Esophagus squamous epithelium (tissue), 5 donors: ENCODE measurements at regions of chr3 and their contacts with region 1.

Region 1: GRCh38 chr3:194333212-194333980 is 17.7 kb downstream of the CPN2 start:
- DNase-seq: no peak
- H3K4me3 ChIP-seq: peak overlapping the region; percentile 19 to 68 (median 48)
- H3K27ac ChIP-seq: peak overlapping the region in 3 of 4 donors; percentile 10 to 83 (median 79)
- H3K4me1 ChIP-seq: peaks cover 10 to 56% (median 23%) of the 10 kb centered on the region in 3 donors
- H3K27me3 ChIP-seq: peaks cover 0 to 42% (median 0%) of the 10 kb centered on the region in 4 donors
- CTCF ChIP-seq: peak; percentile 97 to 99 (median 98)
- POLR2A ChIP-seq: no peak

Region 2: DNA sequence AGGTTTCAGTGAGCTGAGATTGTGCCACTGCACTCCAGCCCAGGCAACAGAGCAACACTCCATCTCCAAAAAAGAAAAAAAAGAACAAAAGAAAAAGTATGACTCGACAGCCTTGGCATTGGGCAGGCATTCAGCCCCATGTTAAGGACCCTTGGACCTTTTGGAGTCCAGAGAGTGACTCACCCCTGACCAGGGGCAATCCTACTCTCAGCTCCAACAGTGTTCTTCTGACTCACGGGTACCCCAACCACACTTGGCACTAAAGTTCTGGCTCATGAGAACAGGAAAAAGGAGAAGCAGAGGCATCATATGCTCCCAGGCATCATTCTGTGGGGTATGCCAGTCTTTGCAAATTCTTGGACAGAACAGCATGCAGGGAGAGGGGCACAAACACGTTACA is 449.8 kb before region 1 on chr3:
- intact Hi-C with region 1: no loop called
- DNase-seq: no peak
- H3K4me3 ChIP-seq: no peak overlapping the region
- H3K27ac ChIP-seq: peak overlapping the region; percentile 63 to 87 (median 84)
- H3K4me1 ChIP-seq: peaks cover 3 to 61% (median 27%) of the 10 kb centered on the region in 3 donors
- H3K27me3 ChIP-seq: no peaks in the 10 kb centered on the region
- CTCF ChIP-seq: no peak
- POLR2A ChIP-seq: no peak

Region 3: DNA sequence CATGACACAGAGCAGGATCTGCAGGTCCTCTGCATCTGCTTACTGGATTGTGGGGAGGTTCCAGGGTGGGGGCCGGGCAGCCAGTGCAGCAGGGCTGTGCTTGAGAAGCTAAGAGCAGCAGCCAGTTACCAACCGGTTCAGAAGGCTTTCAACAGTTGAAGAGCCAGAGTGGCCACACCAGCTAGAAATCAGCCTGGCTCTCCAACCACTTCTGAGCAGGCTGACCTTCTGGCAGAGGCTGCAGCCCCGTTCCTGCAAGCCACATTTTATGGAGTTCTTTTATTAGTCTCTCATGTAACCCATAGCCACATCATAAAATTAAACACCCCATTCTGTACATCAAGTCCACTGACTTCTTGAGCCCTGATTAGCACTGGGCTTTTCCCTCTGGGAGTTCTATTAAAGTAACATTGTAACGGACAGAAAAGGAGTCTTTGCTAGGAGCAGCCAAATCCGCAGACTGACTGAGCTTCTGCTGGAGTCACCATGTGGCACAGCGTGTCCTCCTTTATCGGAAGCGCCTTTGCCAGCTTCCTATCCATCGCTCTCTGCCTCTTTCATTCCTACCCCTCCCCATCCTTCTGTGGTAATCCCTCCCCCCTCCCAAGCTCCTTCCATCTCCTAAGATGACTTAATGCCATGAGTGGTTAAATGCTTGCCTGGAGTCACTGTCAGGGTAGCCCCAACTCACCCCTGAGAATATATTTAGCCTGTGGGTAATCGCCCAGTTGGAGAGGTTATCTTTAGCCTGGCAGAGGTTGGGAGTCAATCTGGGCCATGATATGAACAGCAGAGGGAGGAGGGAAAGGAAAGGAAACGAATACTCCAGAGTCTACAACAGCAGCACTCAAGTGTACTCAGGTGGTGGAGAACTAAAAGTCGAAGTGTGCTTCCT is 335.9 kb before region 1 on chr3:
- intact Hi-C with region 1: no loop called
- DNase-seq: no peak
- H3K4me3 ChIP-seq: no peak overlapping the region
- H3K27ac ChIP-seq: peak overlapping the region in 3 of 4 donors; percentile 7 to 47 (median 9)
- H3K4me1 ChIP-seq: peaks cover 0 to 23% (median 3%) of the 10 kb centered on the region in 3 donors
- H3K27me3 ChIP-seq: peaks cover 0 to 8% (median 0%) of the 10 kb centered on the region in 4 donors
- CTCF ChIP-seq: no peak
- POLR2A ChIP-seq: no peak

Region 4: DNA sequence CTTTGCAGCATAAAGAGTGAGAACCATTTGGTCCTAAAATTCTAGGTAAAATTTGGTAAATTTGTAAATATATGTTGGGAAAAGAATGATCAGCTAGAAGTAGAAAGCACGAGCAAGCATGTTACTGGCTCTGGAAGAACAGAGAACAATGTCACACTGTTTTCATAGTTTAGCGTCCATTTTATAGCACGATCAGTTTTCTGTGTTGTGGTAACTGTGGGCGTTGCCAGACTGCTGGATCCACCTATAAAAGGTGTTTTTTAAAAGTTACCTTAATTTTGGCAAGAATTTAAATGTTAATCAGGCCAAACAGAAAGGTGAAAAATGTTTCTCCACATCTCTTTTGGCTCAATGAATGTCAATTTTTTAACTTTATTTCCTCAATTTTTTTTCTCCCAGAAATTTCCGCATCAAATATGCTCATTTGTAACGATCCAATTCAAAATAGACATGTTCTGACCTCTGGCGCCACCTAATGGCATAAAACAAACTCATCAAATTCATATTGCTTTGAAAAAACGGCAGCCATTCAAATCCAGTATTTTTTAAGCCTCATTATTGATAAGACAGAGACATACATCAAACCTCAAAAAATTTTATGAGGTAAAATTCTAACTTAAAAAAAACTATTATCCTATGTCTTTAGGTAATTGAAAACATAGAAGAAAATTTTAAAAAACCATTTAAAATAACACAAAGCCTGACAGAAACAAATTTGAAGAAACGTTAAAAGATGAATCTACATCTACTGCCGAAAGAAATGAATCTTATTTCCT is 71.2 kb after region 1 on chr3:
- intact Hi-C with region 1: loop called (anchors 5 kb)
- DNase-seq: no peak
- H3K4me3 ChIP-seq: no peak overlapping the region
- H3K27ac ChIP-seq: no peak overlapping the region
- H3K4me1 ChIP-seq: no peaks in the 10 kb centered on the region
- H3K27me3 ChIP-seq: peaks cover 0 to 6% (median 0%) of the 10 kb centered on the region in 4 donors
- CTCF ChIP-seq: peak; percentile 39 to 75 (median 59)
- POLR2A ChIP-seq: no peak

Region 5: GRCh38 chr3:194458131-194458530 is 124.7 kb after region 1 on chr3:
- intact Hi-C with region 1: no loop called
- DNase-seq: no peak
- H3K4me3 ChIP-seq: no peak overlapping the region
- H3K27ac ChIP-seq: no peak overlapping the region
- H3K4me1 ChIP-seq: no peaks in the 10 kb centered on the region
- H3K27me3 ChIP-seq: no peaks in the 10 kb centered on the region
- CTCF ChIP-seq: no peak
- POLR2A ChIP-seq: no peak

Region 6: GRCh38 chr3:194583604-194584318 is 250.4 kb after region 1 on chr3:
- intact Hi-C with region 1: loop called (anchors 5 kb)
- DNase-seq: no peak
- H3K4me3 ChIP-seq: peak overlapping the region; percentile 69 to 94 (median 84)
- H3K27ac ChIP-seq: peak overlapping the region; percentile 89 to 97 (median 94)
- H3K4me1 ChIP-seq: peaks cover 6 to 26% (median 7%) of the 10 kb centered on the region in 3 donors
- H3K27me3 ChIP-seq: no peaks in the 10 kb centered on the region
- CTCF ChIP-seq: peak in 3 of 6 experiments; percentile 6 to 18 (median 10)
- POLR2A ChIP-seq: peak in 3 of 4 donors; percentile 76 to 97 (median 92)